ENCODE measurements at regions of chr4 and their contacts with region 1.

Region 1: DNA sequence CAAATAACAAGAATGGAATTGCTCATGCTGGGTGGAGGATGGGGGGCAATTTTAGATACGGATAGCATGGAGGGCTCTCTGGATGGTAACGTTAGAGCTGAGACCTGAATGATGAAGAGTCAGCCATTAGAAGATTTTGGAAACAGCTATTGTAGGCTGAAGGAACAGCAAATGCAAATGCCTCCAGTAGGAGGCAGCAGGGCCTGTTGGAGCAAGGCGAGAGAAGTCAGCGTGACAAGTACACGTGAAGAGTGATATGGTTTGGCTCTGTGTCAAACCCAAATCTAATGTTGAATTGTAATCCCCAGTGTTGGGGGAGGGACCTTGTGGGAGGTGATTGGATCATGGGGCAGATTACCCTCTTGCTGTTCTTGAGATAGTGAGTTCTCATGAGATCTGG is 59.3 kb upstream of the SOD3 start:
- DNase-seq: peak; percentile 30
- H3K4me3 ChIP-seq: no peak overlapping the region
- H3K27ac ChIP-seq: no peak overlapping the region
- H3K4me1 ChIP-seq: no peaks in the 10 kb centered on the region
- H3K27me3 ChIP-seq: no peaks in the 10 kb centered on the region
- CTCF ChIP-seq: peak; percentile 45

Region 2: GRCh38 chr4:24550441-24551175 is 185.5 kb before region 1 on chr4:
- intact Hi-C with region 1: no loop called
- DNase-seq: no peak
- H3K4me3 ChIP-seq: no peak overlapping the region
- H3K27ac ChIP-seq: no peak overlapping the region
- H3K4me1 ChIP-seq: no peaks in the 10 kb centered on the region
- H3K27me3 ChIP-seq: no peaks in the 10 kb centered on the region
- CTCF ChIP-seq: no peak

Region 3: GRCh38 chr4:24794916-24795665 is 59.0 kb after region 1 on chr4 and contains the start of gene SOD3:
- intact Hi-C with region 1: loop called (anchors 5 kb)
- DNase-seq: peak; percentile 88
- H3K4me3 ChIP-seq: peak within 1 kb of the TSS; percentile 31
- H3K27ac ChIP-seq: peak within 1 kb of the TSS; percentile 74
- H3K4me1 ChIP-seq: peaks cover 3% of the 10 kb centered on the region
- H3K27me3 ChIP-seq: peaks cover 4% of the 10 kb centered on the region
- CTCF ChIP-seq: no peak
- total RNA-seq, gene SOD3: 22.3 to 35.8 TPM

Measured in colonic mucosa (tissue), 4 donors.